ENCODE measurements at regions of chr2 and their contacts with region 1.

Region 1: GRCh38 chr2:27016801-27017325 is 15.9 kb upstream of the TMEM214 start:
- DNase-seq: peak in 1 of 2 donors; percentile 47
- ATAC-seq: peak; percentile 26 to 52
- H3K4me3 ChIP-seq: no peak overlapping the region
- H3K27ac ChIP-seq: peak overlapping the region; percentile 65 to 81 (median 70)
- H3K4me1 ChIP-seq: peaks cover 62 to 96% of the 10 kb centered on the region in 2 donors
- H3K27me3 ChIP-seq: no peaks in the 10 kb centered on the region
- CTCF ChIP-seq: peak; percentile 72 to 89 (median 73)
- POLR2A ChIP-seq: no peak

Region 2: DNA sequence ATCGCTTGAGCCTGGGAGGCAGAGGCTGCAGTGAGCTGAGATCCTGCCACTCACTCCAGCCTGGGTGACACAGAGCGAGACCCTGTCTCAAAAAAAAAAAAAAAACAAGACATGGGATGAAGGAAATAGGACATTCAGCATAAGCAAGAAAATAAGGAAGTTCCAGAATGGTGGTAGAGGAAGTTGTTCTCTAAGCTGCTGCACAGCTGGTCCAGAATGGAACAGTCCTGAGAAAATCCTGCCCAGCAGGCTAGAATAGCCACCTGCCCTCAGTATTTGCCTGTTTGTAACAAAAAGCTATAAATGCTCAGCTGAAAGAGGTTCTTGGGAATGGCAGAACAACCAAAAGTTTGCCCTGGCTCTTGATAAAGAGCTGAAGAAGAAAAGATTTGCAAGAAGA is 57.5 kb before region 1 on chr2:
- in situ Hi-C with region 1: loop called in 3 of 4 experiments (anchors 5 kb)
- intact Hi-C with region 1: loop called (anchors 1 kb)
- DNase-seq: no peak
- ATAC-seq: no peak
- H3K4me3 ChIP-seq: no peak overlapping the region
- H3K27ac ChIP-seq: no peak overlapping the region
- H3K4me1 ChIP-seq: no peaks in the 10 kb centered on the region
- H3K27me3 ChIP-seq: no peaks in the 10 kb centered on the region
- CTCF ChIP-seq: no peak
- POLR2A ChIP-seq: no peak

Region 3: DNA sequence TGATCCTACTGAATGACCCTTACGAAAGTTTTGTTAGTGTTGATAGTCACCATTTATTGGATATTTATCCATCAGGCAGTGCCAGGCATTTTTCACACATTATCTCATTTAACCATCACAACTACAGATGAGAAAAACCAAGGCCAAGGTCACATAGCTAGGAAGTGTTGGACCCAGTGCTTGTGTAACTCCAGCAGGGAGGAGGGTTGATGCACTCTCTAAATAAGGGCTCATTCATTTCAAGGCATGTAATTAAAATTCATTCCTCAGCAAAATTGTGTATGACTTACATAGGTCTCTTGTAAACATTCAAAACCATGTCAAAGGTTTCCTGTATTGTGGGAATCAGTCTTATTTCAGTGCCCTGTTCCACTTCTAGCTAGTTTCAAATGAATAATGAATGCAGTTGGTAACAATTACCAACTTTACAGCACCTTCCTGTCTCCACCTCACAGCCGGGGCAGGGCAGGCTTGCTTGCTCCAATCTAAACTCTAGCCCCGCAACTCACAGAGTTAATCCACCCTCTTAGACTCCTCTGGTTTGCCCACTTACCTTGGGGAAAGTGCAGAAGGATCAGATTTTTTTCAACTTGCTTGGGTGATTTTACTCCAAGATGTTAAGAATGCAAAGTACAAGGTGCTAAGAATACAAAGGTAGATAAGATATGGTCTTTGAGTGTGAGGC is 52.3 kb before region 1 on chr2:
- in situ Hi-C with region 1: loop called (anchors 5 kb)
- intact Hi-C with region 1: loop called (anchors 1 kb)
- DNase-seq: no peak
- ATAC-seq: no peak
- H3K4me3 ChIP-seq: no peak overlapping the region
- H3K27ac ChIP-seq: no peak overlapping the region
- H3K4me1 ChIP-seq: no peaks in the 10 kb centered on the region
- H3K27me3 ChIP-seq: no peaks in the 10 kb centered on the region
- CTCF ChIP-seq: no peak
- POLR2A ChIP-seq: no peak